Astrocyte of the cerebellum (primary cell): ENCODE measurements at regions of chr19 and their contacts with region 1.

Region 1: GRCh38 chr19:15893477-15893876 is 4.4 kb downstream of the CYP4F2 start:
- DNase-seq: no peak
- H3K4me3 ChIP-seq: no peak overlapping the region
- CTCF ChIP-seq: no peak

Region 2: GRCh38 chr19:15640294-15640903 is 253.1 kb before region 1 on chr19 and contains the start of gene CYP4F3:
- in situ Hi-C with region 1: loop called (anchors 5 kb)
- DNase-seq: no peak
- H3K4me3 ChIP-seq: no peak within 1 kb of the TSS
- CTCF ChIP-seq: no peak

Region 3: GRCh38 chr19:15937771-15938170 is 44.3 kb after region 1 on chr19:
- in situ Hi-C with region 1: no loop called
- DNase-seq: no peak
- H3K4me3 ChIP-seq: no peak overlapping the region
- CTCF ChIP-seq: no peak